Aorta (tissue), 5 donors: ENCODE measurements at regions of chr15 and their contacts with region 1.

Region 1: GRCh38 chr15:60315878-60316277 is 81.9 kb downstream of the ANXA2 start:
- DNase-seq: no peak
- ATAC-seq: no peak
- H3K4me3 ChIP-seq: no peak overlapping the region
- H3K27ac ChIP-seq: no peak overlapping the region
- H3K4me1 ChIP-seq: no peaks in the 10 kb centered on the region
- H3K27me3 ChIP-seq: peaks cover 0 to 2% of the 10 kb centered on the region in 2 donors

Region 2: DNA sequence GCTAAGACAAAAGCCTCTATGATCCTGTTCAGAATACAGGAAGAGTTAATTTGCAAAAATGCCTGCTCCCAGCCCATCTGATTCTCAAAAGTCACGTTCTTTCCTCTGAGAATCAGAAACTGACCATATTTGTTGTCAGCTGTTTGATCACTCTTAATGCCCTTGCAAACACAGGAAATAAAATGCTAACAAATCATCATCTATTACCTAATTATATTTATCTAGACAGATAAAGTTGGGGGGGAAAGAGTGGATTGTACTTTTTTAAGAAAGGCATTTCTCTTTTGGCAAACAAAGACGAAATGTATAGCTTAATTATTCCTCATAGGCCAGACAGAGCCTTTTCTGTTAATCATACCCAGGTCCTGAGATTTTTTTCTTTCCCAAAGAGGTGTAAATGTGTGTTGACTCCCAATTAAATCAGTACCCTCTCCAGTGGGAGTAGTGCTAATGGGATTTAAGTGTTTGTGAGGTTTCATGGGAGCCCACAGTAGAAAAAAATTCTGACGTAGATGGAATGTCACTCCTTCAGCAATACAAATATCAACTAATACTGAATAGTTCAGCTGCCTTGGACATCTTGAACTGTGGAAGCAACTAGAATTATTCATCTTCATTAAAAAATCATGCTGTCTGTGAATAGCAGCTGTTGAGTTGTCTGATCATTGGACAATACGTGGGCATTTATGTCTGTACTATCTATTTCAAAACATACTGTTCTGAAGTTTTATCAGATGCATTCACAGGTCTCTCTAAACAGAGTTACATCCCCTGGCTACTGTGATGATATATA is 604.2 kb before region 1 on chr15:
- intact Hi-C with region 1: loop called in 1 of 2 experiments (anchors 10 kb)
- DNase-seq: no peak
- ATAC-seq: no peak
- H3K4me3 ChIP-seq: no peak overlapping the region
- H3K27ac ChIP-seq: no peak overlapping the region
- H3K4me1 ChIP-seq: no peaks in the 10 kb centered on the region
- H3K27me3 ChIP-seq: peaks cover 0 to 4% of the 10 kb centered on the region in 2 donors

Region 3: GRCh38 chr15:60204131-60204885 is 111.6 kb before region 1 on chr15:
- intact Hi-C with region 1: no loop called
- DNase-seq: no peak
- ATAC-seq: no peak
- H3K4me3 ChIP-seq: no peak overlapping the region
- H3K27ac ChIP-seq: no peak overlapping the region
- H3K4me1 ChIP-seq: no peaks in the 10 kb centered on the region
- H3K27me3 ChIP-seq: peaks cover 0 to 2% of the 10 kb centered on the region in 2 donors